HEK293 (cell line): ENCODE measurements at regions of chr3 and their contacts with region 1.

Region 1: DNA sequence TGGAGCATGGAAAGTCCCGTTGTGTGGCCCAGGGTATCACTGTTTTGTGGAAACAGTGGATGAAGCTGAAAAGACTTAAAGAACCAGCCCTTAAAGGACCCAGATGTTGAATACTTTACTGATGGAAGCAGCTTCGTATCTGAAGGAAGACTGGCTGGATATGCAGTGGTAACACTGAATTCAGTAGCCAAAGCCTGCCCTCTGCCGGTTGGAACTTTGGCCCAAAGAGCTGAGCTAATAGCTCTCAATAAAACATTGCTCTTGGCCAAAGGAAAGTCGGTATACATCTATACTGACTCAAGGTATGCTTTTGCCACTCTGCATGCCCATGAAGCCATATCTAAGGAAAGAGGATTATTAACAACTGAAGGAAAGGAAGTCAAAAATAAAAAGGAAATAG is 885.4 kb downstream of the PDCD6IP start:
- H3K4me3 ChIP-seq: no peak overlapping the region
- H3K27ac ChIP-seq: no peak overlapping the region
- H3K4me1 ChIP-seq: no peaks in the 10 kb centered on the region
- CTCF ChIP-seq: no peak

Region 2: DNA sequence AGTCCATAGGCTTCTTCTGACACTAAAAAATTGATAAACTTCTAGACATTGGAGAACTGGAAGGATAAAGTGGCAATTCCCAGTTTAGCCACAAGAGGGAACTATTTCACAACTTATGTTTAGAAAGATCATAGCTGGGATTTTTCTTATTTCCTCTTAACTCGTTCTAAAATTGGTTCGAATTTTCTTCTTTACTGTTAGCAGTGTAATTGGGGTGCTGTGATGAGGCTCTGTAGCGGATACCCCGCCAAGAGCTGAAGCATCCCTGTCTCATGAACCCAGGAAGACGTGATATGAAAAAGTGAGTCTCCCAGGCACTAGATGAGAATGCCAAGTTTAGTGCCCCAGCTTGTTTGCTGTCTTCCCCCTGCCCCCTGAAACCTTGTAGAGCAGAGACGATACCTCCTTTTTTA is 800.3 kb before region 1 on chr3:
- CTCF ChIA-PET with region 1: interaction called, 70 read pairs
- POLR2A ChIA-PET with region 1: no interaction called
- H3K4me3 ChIP-seq: peak overlapping the region; percentile 23
- H3K27ac ChIP-seq: no peak overlapping the region
- H3K4me1 ChIP-seq: no peaks in the 10 kb centered on the region
- CTCF ChIP-seq: peak; percentile 26; the same call in 1 of the 2 replicates

Region 3: GRCh38 chr3:34260271-34261006 is 423.4 kb before region 1 on chr3:
- CTCF ChIA-PET with region 1: interaction called, 15 read pairs
- POLR2A ChIA-PET with region 1: no interaction called
- H3K4me3 ChIP-seq: no peak overlapping the region
- H3K27ac ChIP-seq: no peak overlapping the region
- H3K4me1 ChIP-seq: no peaks in the 10 kb centered on the region
- CTCF ChIP-seq: no peak

Region 4: DNA sequence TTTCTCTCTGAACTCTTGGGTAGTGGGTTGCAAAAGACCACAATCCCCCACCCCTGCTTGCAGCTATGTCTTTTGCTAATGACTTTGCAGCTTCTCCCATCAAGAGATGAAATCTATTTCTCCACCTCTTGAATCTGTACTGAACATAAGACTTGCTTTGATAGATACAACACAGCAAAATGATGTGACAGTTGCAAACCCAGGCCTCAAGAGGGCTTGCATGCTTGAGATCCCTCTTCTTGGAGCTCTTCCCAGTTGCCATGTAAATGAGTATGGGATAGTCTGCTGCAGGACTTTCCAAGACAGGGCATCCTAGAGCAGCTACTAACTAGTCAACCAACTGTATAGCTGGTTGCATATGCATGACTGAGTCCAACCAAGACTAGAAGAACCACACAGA is 101.8 kb before region 1 on chr3:
- CTCF ChIA-PET with region 1: no interaction called
- POLR2A ChIA-PET with region 1: no interaction called
- H3K4me3 ChIP-seq: no peak overlapping the region
- H3K27ac ChIP-seq: no peak overlapping the region
- H3K4me1 ChIP-seq: no peaks in the 10 kb centered on the region
- CTCF ChIP-seq: no peak